ENCODE measurements at regions of chr7 and their contacts with region 1.

Region 1: GRCh38 chr7:102236592-102237287 is 49.9 kb upstream of the SH2B2 start:
- DNase-seq: peak; percentile 86
- CTCF ChIP-seq: peak; percentile 82

Region 2: DNA sequence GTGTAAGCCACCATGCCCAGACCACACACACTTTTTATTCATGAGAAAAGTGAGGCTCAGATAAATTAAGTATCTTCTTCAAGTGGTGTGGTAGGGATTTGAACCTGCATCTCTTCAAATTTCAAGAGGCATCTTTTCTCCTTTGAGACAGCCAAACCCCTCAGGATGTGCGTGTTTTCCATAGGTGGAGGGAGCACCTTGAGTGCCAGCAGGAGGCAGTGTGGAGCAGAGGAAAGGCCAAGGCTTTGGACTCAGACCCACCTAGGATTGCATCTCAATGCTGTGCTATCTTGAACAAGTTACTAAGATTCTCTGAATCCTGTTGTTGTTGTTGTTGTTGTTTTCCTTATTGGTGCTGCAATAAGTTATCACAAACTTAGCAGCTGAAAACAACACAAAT is 567.4 kb before region 1 on chr7:
- in situ Hi-C with region 1: loop called (anchors 10 kb)
- DNase-seq: no peak
- CTCF ChIP-seq: peak; percentile 33

Region 3: GRCh38 chr7:101990811-101991418 is 245.8 kb before region 1 on chr7:
- in situ Hi-C with region 1: loop called (anchors 10 kb)
- DNase-seq: peak; percentile 76
- CTCF ChIP-seq: no peak